ENCODE measurements at regions of chr21 and their contacts with region 1.

Region 1: GRCh38 chr21:38913120-38913892 is 107.6 kb downstream of the ETS2 start:
- DNase-seq: peak; percentile 61 to 72
- ATAC-seq: peak; percentile 49 to 83 (median 77)
- H3K4me3 ChIP-seq: peak overlapping the region in 7 of 10 donors; percentile 5 to 36 (median 19)
- H3K27ac ChIP-seq: peak overlapping the region; percentile 4 to 92 (median 78)
- H3K4me1 ChIP-seq: peaks cover 12 to 70% (median 44%) of the 10 kb centered on the region in 9 donors
- H3K27me3 ChIP-seq: no peaks in the 10 kb centered on the region
- CTCF ChIP-seq: no peak

Region 2: DNA sequence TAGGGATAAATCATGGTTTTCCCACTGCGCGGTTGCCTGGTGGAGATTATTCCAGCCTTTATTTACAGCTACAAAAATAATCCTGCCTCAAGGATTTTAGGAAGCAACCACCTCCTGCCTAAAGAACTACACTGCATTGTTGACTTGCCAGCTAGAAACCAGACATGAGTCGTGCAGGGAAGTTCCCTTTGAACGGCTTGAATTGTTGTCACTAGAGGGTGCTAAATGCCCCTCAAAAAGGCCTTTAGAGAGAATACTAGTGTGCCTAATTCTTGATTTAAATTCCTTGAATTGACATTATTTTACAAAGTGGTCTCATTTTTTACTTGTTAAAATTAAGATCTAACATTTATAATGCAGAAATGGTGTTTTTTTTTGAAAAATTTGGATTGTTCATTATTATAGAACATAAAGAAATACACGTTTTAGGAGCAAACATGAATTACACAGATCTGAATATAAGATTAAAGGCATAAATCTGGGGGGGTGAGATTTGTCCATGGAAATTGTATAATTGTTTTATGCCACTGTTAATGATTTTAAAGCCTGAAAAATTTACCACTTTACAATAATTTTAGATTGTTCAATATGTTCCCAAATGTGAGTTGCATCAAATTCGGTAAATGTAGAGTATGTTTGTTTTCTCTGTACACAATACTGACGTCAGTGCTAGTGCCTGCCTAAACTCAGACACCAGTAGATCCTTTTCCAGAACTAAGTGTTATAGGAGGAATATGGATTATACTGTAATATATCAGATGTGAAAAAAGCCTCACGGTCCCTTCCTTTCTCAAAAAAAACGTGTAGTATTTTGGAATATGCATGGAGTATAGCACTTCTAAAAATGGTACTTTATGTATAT is 407.4 kb before region 1 on chr21:
- intact Hi-C with region 1: loop called in 1 of 10 experiments (anchors 5 kb)
- DNase-seq: peak in 1 of 2 donors; percentile 64
- ATAC-seq: peak; percentile 77 to 94 (median 88)
- H3K4me3 ChIP-seq: peak overlapping the region in 2 of 10 donors; percentile 14 to 26
- H3K27ac ChIP-seq: peak overlapping the region in 3 of 10 donors; percentile 3 to 13 (median 13)
- H3K4me1 ChIP-seq: peaks cover 0 to 49% (median 13%) of the 10 kb centered on the region in 9 donors
- H3K27me3 ChIP-seq: no peaks in the 10 kb centered on the region
- CTCF ChIP-seq: peak; percentile 50 to 90 (median 74)

Region 3: DNA sequence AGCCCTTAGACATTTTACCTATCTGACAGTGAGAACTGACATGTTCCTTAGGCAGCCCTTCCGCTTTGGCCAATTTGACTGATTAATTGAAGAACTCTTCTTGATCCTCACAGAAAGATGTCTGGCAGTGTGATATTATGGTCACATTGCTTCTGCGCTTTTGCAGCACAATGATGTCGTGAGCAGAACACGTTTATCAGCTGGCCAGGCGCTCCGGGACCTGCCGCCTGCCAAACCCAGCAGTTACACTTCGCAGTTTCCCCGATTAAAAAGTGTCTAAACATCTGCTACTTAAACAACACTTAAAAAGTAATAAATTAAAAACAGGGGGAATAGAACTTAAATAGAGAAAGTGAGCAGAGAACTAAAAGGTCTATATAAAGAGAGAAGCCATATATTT is 211.1 kb before region 1 on chr21:
- intact Hi-C with region 1: no loop called
- DNase-seq: peak in 1 of 2 donors; percentile 22
- ATAC-seq: peak in 2 of 8 donors; percentile 21 to 35
- H3K4me3 ChIP-seq: peak overlapping the region in 2 of 10 donors; percentile 1 to 13
- H3K27ac ChIP-seq: no peak overlapping the region
- H3K4me1 ChIP-seq: peaks cover 0 to 5% (median 0%) of the 10 kb centered on the region in 9 donors
- H3K27me3 ChIP-seq: peaks cover 0 to 50% (median 0%) of the 10 kb centered on the region in 7 donors
- CTCF ChIP-seq: no peak

Region 4: GRCh38 chr21:38819714-38820183 is 93.6 kb before region 1 on chr21:
- intact Hi-C with region 1: loop called in 2 of 10 experiments (anchors 5 kb)
- DNase-seq: no peak
- ATAC-seq: no peak
- H3K4me3 ChIP-seq: no peak overlapping the region
- H3K27ac ChIP-seq: peak overlapping the region in 3 of 10 donors; percentile 6 to 87 (median 27)
- H3K4me1 ChIP-seq: peaks cover 0 to 82% (median 43%) of the 10 kb centered on the region in 9 donors
- H3K27me3 ChIP-seq: no peaks in the 10 kb centered on the region
- CTCF ChIP-seq: no peak

Region 5: GRCh38 chr21:38985568-38986378 is 72.5 kb after region 1 on chr21:
- intact Hi-C with region 1: loop called in 4 of 10 experiments (anchors 2 to 5 kb)
- DNase-seq: peak; percentile 65 to 75
- ATAC-seq: peak; percentile 40 to 78 (median 66)
- H3K4me3 ChIP-seq: no peak overlapping the region
- H3K27ac ChIP-seq: peak overlapping the region; percentile 9 to 82 (median 62)
- H3K4me1 ChIP-seq: peaks cover 21 to 66% (median 64%) of the 10 kb centered on the region in 9 donors
- H3K27me3 ChIP-seq: peaks cover 0 to 5% (median 0%) of the 10 kb centered on the region in 7 donors
- CTCF ChIP-seq: no peak

Region 6: DNA sequence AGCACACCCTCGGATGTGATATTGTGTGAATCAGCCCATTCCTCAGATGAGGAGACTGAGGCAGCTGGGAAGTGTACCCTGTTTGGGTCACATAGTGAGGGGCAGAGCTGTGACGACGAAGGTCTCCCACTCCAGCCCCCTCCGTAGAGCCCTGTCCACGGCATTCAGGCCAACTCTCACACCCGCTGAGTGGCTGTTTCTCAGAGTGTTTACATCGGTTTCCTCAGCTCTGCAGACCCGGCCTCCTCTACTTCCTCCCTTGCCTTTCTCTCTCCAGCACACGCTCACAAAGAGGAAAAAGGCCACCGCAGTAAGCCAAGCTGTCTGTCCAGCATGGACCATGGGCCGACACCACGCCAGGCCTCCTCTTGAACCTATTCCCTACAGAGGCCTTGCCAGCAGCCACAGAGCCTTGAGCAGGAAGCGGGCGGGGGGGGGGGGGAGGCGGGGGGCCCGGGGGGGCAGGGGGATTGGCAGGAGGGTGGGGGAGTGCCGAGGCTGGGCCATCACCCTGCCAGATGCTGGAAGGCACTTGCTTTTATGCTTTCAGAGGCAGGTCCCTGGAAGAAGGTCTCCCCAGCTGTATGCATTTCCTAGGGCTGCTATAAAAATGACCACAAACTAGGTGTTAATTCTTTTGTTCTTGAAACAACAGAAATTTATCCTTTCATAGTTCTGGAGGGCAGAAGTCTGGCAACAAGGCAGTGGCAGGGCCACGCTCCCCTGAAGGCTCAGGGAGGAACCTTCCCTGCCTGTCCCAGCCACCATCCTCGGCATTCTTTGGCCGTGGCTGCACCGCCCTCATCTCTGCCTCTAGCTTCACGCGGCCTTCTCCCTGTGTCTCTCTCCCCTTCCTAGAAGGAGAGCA is 91.6 kb after region 1 on chr21:
- intact Hi-C with region 1: loop called in 2 of 10 experiments (anchors 5 kb)
- DNase-seq: peak; percentile 65 to 78
- ATAC-seq: peak; percentile 38 to 74 (median 65)
- H3K4me3 ChIP-seq: no peak overlapping the region
- H3K27ac ChIP-seq: peak overlapping the region; percentile 74 to 92 (median 84)
- H3K4me1 ChIP-seq: peaks cover 13 to 91% (median 76%) of the 10 kb centered on the region in 9 donors
- H3K27me3 ChIP-seq: no peaks in the 10 kb centered on the region
- CTCF ChIP-seq: no peak

Region 7: GRCh38 chr21:39066829-39067780 is 153.8 kb after region 1 on chr21:
- intact Hi-C with region 1: loop called in 1 of 10 experiments (anchors 5 kb)
- DNase-seq: peak in 1 of 2 donors; percentile 39
- ATAC-seq: peak; percentile 75 to 86 (median 81)
- H3K4me3 ChIP-seq: no peak overlapping the region
- H3K27ac ChIP-seq: peak overlapping the region; percentile 17 to 78 (median 60)
- H3K4me1 ChIP-seq: peaks cover 9 to 38% (median 23%) of the 10 kb centered on the region in 9 donors
- H3K27me3 ChIP-seq: no peaks in the 10 kb centered on the region
- CTCF ChIP-seq: peak in 5 of 9 donors; percentile 21 to 53 (median 27)

Region 8: DNA sequence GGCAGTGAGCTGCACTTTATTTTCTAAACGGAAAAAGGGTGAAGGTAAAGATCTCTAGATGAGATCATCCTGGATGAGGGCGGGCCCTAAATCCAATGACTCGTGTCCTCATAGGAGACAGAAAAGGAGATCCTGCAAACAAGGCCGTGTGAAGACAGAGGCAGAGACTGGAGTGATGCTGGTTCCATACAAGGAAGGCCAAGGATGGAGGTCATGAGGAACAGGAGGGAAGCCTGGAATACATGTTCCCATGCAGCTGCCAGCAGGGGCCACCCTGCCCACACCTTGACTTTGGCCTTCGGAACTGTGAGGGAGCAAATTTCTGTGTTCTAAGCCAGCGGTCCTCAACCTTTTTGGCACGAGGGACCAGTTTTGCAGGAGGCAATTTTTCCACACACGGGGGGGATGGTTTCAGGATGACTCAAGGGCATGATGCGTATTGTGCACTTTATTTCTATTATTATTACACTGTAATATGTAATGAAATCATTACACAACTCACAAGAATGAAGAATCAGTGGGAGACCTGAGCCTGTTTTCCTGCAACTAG is 175.6 kb after region 1 on chr21:
- intact Hi-C with region 1: loop called in 2 of 10 experiments (anchors 10 kb)
- DNase-seq: peak in 1 of 2 donors; percentile 47
- ATAC-seq: peak in 6 of 8 donors; percentile 34 to 58 (median 47)
- H3K4me3 ChIP-seq: no peak overlapping the region
- H3K27ac ChIP-seq: peak overlapping the region in 7 of 10 donors; percentile 88 to 98 (median 95)
- H3K4me1 ChIP-seq: peaks cover 2 to 59% (median 33%) of the 10 kb centered on the region in 9 donors
- H3K27me3 ChIP-seq: no peaks in the 10 kb centered on the region
- CTCF ChIP-seq: peak in 6 of 9 donors; percentile 10 to 43 (median 28)

Region 9: GRCh38 chr21:39263372-39263771 is 350.1 kb after region 1 on chr21:
- intact Hi-C with region 1: no loop called
- DNase-seq: no peak
- ATAC-seq: no peak
- H3K4me3 ChIP-seq: no peak overlapping the region
- H3K27ac ChIP-seq: no peak overlapping the region
- H3K4me1 ChIP-seq: no peaks in the 10 kb centered on the region
- H3K27me3 ChIP-seq: no peaks in the 10 kb centered on the region
- CTCF ChIP-seq: no peak

Measured in heart right ventricle (tissue), 16 donors.